Dorsolateral prefrontal cortex (tissue), 120 donors: ENCODE measurements at regions of chr12 and their contacts with region 1.

Region 1: GRCh38 chr12:113422030-113422885 is at the start of gene SDSL:
- DNase-seq: peak in 6 of 10 donors; percentile 50 to 64 (median 60)
- H3K4me3 ChIP-seq: peak within 1 kb of the TSS; percentile 6 to 69 (median 49)
- H3K27ac ChIP-seq: peak within 1 kb of the TSS in 44 of 59 donors; percentile 8 to 85 (median 60)
- H3K27me3 ChIP-seq: no peaks in the 10 kb centered on the region
- CTCF ChIP-seq: no peak
- total RNA-seq, gene SDSL: 2.7 to 21.9 (median 7.0) TPM

Region 2: GRCh38 chr12:113196996-113197395 is 225.3 kb before region 1 on chr12:
- intact Hi-C with region 1: loop called in 1 of 2 experiments (anchors 5 kb)
- DNase-seq: peak in 7 of 10 donors; percentile 30 to 70 (median 61)
- H3K4me3 ChIP-seq: no peak overlapping the region
- H3K27ac ChIP-seq: no peak overlapping the region
- H3K27me3 ChIP-seq: no peaks in the 10 kb centered on the region
- CTCF ChIP-seq: peak in 55 of 56 donors; percentile 45 to 82 (median 70)

Region 3: DNA sequence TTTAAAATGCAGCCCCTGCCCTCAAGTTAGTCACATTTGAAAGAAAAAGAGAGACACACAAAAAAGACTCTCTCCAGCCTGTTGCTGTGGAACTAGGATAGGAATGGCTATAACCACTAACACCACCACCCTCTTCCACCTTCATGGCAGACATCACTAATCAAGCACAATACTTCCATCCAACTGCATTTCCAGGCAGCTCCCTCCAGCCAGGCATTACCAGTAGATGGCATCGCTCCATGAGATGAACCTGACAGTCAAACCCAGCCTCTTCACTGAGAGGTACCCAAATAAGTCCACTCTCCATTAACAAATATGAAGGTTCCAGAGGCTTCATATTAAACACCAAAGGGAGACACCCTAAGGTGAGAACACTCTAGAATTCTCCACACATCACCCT is 111.8 kb before region 1 on chr12:
- intact Hi-C with region 1: loop called (anchors 5 to 10 kb)
- DNase-seq: no peak
- H3K4me3 ChIP-seq: no peak overlapping the region
- H3K27ac ChIP-seq: no peak overlapping the region
- H3K27me3 ChIP-seq: no peaks in the 10 kb centered on the region
- CTCF ChIP-seq: peak in 1 of 56 donors; percentile 9

Region 4: DNA sequence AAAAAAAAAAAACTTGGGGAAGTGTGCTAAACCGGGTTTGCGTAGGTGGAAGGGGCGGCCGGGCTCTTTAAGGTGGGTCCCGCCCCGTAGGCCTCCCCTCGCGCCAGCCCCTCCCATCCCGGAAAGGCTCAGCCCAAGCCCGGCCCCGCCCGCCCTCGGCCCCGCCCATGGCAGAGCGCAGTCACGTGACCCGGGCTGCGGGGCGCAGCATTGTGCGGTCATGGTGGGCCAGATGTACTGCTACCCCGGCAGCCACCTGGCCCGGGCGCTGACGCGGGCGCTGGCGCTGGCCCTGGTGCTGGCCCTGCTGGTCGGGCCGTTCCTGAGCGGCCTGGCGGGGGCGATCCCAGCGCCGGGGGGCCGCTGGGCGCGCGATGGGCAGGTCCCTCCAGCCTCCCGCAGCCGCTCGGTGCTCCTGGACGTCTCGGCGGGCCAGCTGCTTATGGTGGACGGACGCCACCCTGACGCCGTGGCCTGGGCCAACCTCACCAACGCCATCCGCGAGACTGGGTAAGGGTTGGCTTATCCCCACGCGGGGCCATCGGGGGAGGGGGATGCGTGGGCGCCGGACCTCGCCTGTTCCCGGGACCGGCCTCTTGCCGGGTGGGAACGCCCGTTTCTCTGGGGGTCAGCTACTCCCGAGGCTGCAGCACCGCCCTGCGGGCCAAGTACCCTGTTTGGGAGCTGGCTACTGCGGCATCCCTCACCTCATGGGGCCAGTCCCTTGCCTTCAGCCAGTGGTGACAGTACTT is 63.7 kb before region 1 on chr12 and contains the start of gene PLBD2:
- intact Hi-C with region 1: loop called in 1 of 2 experiments (anchors 2 kb)
- DNase-seq: peak; percentile 90 to 97 (median 94)
- H3K4me3 ChIP-seq: peak within 1 kb of the TSS; percentile 52 to 98 (median 88)
- H3K27ac ChIP-seq: peak within 1 kb of the TSS; percentile 74 to 97 (median 93)
- H3K27me3 ChIP-seq: no peaks in the 10 kb centered on the region
- CTCF ChIP-seq: peak in 23 of 56 donors; percentile 2 to 49 (median 18)
- total RNA-seq, gene PLBD2: 37.6 to 72.7 (median 54.3) TPM

Region 5: DNA sequence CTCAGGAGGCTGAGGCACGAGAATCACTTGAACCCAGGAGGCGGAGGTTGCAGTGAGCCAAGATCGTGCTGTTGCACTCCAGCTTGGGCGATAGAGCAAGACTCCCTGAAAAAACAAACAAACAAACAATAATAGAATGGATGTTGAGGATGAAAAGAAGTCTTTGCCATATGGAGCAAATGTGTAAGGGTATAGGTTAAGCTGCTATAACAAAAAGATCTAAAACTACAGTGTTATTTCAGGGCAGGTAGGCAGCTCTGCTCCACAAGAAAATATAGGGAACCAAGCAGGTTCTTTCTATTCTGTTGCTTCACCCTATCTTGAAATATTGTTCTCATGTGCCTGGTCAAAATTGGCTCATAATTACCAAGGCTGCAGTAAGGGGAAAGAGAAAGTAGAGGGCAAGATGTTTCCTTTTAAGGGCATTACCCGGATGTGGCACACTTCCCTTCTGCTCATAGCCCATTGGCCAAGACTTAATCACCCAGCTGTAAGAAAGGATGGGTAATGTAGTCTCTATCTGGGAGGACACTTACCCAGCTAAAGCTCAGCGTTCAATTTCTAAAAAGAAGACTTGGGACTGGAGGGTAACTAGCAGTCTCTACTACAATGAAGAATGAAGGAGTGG is 23.4 kb after region 1 on chr12:
- intact Hi-C with region 1: no loop called
- DNase-seq: no peak
- H3K4me3 ChIP-seq: no peak overlapping the region
- H3K27ac ChIP-seq: no peak overlapping the region
- H3K27me3 ChIP-seq: peaks cover 0 to 33% (median 0%) of the 10 kb centered on the region in 45 donors
- CTCF ChIP-seq: no peak